GM10248 (cell line): ENCODE measurements at regions of chr6 and their contacts with region 1.

Region 1: DNA sequence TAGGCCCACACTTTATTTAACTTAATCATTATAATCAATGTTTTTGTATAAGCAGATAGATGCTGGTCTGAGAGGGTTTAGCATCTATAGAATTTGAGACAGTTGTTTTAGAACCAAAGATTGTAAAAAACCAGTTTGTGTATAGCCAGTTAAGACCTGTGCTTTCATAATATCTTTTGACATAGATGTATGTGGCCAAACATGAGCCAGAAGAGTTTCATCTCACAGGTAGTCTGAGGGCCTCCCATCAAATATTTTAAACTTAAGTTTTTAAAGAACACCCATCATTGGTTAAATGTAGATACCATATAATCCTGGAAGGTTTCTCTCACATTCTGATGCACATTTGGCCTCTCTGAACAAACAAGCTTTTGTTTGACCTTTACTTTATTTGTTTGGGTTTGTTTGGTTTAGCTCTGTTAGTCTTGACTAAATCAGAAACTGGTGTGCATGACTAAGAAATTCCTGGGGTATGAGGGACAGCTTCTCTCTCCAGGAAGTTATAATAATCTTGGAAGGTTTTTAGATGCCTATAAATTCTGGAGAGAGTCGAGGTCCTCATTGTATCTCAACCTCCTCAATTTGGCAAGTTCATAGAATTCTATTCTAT is 58.0 kb upstream of the TMEM200A start:
- DNase-seq: no peak
- CTCF ChIP-seq: no peak

Region 2: GRCh38 chr6:130322673-130323268 is 14.9 kb after region 1 on chr6:
- CTCF ChIA-PET with region 1: interaction called, 14 read pairs
- POLR2A ChIA-PET with region 1: no interaction called
- DNase-seq: peak; percentile 31
- CTCF ChIP-seq: peak; percentile 89